Calu3 (cell line): ENCODE measurements at regions of chr22 and their contacts with region 1.

Region 1: DNA sequence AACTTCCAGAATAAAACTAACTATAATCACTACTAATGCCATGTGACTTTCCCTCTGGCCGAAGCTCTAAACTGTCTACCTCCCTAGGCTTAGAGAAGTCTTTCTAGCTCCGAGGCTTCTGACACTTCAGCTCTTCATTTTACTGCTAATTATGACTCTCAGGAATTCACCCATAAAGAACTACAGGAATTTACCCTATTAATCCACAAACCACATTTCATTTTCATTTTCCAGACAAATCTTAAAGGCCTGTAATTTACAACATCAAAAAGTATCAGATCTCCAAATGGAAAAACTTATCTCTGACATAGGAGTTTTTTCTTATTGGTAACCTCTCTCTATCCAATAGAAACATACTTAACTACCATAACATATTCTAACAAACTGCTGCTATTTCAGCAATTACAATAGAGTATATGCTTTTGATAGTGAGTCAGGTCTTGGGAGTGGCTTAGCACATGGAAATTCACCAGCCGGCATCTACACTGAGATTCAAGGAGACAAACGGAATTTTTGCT is 33.4 kb downstream of the MRTFA start:
- DNase-seq: no peak
- H3K4me3 Mint-ChIP-seq: no peak overlapping the region
- H3K27ac Mint-ChIP-seq: no peak overlapping the region
- H3K4me1 Mint-ChIP-seq: peaks cover 61% of the 10 kb centered on the region
- H3K27me3 Mint-ChIP-seq: no peaks in the 10 kb centered on the region
- CTCF ChIP-seq: no peak

Region 2: DNA sequence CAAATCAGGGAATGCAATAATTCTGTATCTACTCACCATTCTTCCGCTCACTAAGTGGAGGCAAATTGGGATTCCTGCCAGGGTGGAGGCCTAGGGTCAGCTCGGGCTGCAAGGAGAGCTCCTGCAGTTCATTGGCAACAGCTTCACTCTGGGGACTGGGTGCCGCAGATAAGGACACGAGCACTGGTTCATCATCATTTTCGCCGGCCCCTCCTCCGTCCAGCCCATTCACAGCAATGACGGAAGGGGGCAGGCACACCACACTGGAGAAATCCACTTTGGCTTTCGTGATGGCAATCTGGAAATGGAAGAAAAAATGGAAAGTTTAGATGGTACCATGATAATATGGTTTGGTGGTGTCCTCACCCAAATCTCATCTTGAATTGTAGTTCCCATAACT is 51.1 kb before region 1 on chr22:
- CTCF ChIA-PET with region 1: no interaction called
- intact Hi-C with region 1: loop called (anchors 10 kb)
- DNase-seq: no peak
- H3K4me3 Mint-ChIP-seq: no peak overlapping the region
- H3K27ac Mint-ChIP-seq: no peak overlapping the region
- H3K4me1 Mint-ChIP-seq: no peaks in the 10 kb centered on the region
- H3K27me3 Mint-ChIP-seq: no peaks in the 10 kb centered on the region
- CTCF ChIP-seq: no peak